ENCODE measurements at regions of chr12 and their contacts with region 1.

Region 1: GRCh38 chr12:133174901-133175300 is 6.4 kb upstream of the ZNF268 start:
- DNase-seq: no peak
- H3K4me3 ChIP-seq: no peak overlapping the region
- CTCF ChIP-seq: no peak

Region 2: DNA sequence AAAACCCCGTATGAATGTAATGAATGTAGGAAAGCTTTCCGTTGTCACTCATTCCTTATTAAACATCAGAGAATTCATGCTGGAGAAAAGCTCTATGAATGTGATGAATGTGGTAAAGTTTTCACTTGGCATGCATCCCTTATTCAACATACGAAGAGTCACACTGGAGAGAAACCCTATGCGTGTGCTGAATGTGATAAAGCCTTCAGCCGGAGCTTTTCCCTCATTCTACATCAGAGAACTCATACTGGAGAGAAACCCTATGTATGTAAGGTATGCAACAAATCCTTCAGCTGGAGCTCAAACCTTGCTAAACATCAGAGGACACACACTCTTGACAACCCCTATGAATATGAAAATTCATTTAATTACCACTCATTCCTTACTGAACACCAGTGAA is 68.6 kb before region 1 on chr12:
- in situ Hi-C with region 1: loop called (anchors 5 kb)
- DNase-seq: no peak
- H3K4me3 ChIP-seq: no peak overlapping the region
- CTCF ChIP-seq: no peak

Region 3: GRCh38 chr12:133217219-133217618 is 42.3 kb after region 1 on chr12:
- in situ Hi-C with region 1: no loop called
- DNase-seq: no peak
- H3K4me3 ChIP-seq: no peak overlapping the region
- CTCF ChIP-seq: no peak

Measured in astrocyte of the cerebellum (primary cell).